ENCODE measurements at regions of chr16 and their contacts with region 1.

Region 1: DNA sequence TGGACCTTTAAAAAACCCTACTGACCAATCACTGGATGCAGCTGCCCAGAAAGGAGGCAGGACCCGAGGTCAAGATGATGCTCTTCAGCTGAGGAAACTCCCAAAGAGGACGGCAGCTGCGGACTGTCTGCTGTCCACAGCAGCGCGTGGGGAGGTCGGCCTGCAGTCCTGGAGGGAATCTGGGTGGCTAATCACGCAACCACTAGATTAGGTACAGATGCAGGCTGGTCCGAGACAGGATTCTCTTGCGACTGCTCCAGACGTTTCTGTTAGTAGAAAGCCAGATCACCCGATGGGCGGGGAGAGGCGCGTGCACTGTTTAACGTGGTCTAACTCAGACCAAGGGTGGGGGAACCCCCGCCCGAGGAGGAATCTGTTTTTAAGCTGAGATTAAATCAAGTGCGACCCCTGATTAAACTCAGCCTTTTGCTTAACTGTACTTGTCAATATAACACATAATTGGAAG is 8.8 kb downstream of the CTRB2 start:
- DNase-seq: no peak
- H3K4me3 Mint-ChIP-seq: no peak overlapping the region
- H3K27ac Mint-ChIP-seq: no peak overlapping the region
- H3K4me1 Mint-ChIP-seq: peaks cover 9% of the 10 kb centered on the region
- H3K27me3 Mint-ChIP-seq: peaks cover 13% of the 10 kb centered on the region

Region 2: DNA sequence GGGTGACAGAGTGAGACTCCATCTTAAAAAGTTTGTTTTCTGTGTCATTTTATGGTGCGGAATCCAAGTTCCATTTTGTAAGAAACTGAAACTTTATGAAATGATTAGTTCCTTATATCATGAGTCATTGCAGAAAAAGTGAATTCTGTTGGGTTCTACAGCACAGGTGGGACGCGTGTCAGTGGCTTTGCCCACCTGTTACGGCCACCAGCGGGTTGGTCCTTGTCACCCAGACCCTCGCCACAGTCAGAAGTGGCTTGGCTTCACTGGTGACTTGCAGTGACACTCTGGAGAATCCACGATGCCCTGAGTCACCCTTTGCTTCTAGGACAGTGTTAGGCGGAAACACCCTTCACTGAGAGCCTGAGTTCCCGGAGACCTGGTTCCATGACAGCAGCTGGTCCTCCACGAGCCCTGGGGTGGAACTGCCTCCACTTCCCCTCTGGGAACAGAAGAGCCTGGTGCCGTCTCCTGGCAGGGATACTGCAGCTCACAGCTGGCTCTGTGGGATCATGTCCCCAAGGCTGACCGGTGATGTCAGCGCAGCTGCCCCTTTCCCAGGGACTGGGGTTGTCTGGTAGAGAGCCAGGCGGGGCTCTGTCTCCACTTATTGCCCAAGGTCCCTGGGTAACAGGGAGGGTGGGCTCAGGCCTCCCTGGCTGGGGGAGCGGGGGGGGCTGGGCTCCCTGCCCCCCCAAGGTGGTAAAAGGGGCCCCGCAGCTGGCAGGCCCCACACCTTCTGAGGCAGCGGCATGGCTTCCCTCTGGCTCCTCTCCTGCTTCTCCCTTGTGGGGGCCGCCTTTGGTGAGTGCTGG is 20.3 kb after region 1 on chr16 and contains the start of gene CTRB1:
- CTCF ChIA-PET with region 1: interaction called, 32 read pairs
- POLR2A ChIA-PET with region 1: no interaction called
- intact Hi-C with region 1: loop called (anchors 2 kb)
- DNase-seq: peak; percentile 37
- H3K4me3 Mint-ChIP-seq: peak within 1 kb of the TSS; percentile 61
- H3K27ac Mint-ChIP-seq: peak within 1 kb of the TSS; percentile 75
- H3K4me1 Mint-ChIP-seq: peaks cover 10% of the 10 kb centered on the region
- H3K27me3 Mint-ChIP-seq: no peaks in the 10 kb centered on the region
- total RNA-seq, gene CTRB1: not detected

Region 3: DNA sequence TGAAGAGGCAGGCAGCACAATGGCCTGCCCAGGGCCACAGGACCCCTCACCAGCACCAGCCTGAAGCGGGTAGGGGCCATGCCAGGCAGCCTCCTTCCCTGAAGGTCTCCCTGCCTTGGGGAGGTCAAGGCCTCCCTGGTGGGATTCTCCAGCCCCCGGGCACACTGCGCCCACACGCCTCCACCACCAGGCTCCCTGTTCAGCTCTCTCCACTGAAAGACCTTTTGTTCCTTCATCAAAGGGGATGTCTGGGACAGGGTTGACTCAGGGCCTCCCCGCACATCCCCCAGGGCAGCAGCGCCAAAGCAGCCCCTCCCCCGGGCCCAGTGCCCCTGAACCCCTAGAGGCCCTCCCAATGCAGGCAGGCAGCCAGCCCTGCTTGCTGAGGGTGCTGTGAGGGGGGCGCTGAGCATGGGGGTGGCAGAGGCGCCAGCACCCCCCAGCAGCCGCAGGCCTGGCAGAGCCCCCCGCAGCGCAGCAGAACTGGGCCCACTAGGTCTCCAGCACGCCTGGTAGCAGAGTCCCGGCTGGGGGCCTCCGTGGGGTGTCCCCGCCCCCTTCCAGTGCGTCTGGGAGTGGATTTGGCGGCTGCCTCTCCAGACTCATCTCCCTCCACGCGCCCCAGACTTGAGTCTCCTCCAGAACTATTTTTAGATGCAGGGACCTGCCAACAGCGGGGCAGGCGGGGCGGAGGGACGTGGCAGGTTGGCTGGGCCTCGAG is 40.1 kb after region 1 on chr16:
- CTCF ChIA-PET with region 1: interaction called, 45 read pairs
- POLR2A ChIA-PET with region 1: no interaction called
- intact Hi-C with region 1: loop called (anchors 1 kb)
- DNase-seq: no peak
- H3K4me3 Mint-ChIP-seq: no peak overlapping the region
- H3K27ac Mint-ChIP-seq: no peak overlapping the region
- H3K4me1 Mint-ChIP-seq: peaks cover 2% of the 10 kb centered on the region
- H3K27me3 Mint-ChIP-seq: no peaks in the 10 kb centered on the region

Region 4: GRCh38 chr16:75385507-75386152 is 187.5 kb after region 1 on chr16:
- CTCF ChIA-PET with region 1: interaction called, 56 read pairs
- POLR2A ChIA-PET with region 1: no interaction called
- intact Hi-C with region 1: loop called (anchors 1 kb)
- DNase-seq: no peak
- H3K4me3 Mint-ChIP-seq: no peak overlapping the region
- H3K27ac Mint-ChIP-seq: no peak overlapping the region
- H3K4me1 Mint-ChIP-seq: peaks cover 22% of the 10 kb centered on the region
- H3K27me3 Mint-ChIP-seq: no peaks in the 10 kb centered on the region

Region 5: GRCh38 chr16:75402821-75403475 is 204.8 kb after region 1 on chr16:
- CTCF ChIA-PET with region 1: interaction called, 31 read pairs
- POLR2A ChIA-PET with region 1: no interaction called
- intact Hi-C with region 1: loop called (anchors 1 kb)
- DNase-seq: no peak
- H3K4me3 Mint-ChIP-seq: no peak overlapping the region
- H3K27ac Mint-ChIP-seq: no peak overlapping the region
- H3K4me1 Mint-ChIP-seq: peaks cover 16% of the 10 kb centered on the region
- H3K27me3 Mint-ChIP-seq: no peaks in the 10 kb centered on the region

Region 6: DNA sequence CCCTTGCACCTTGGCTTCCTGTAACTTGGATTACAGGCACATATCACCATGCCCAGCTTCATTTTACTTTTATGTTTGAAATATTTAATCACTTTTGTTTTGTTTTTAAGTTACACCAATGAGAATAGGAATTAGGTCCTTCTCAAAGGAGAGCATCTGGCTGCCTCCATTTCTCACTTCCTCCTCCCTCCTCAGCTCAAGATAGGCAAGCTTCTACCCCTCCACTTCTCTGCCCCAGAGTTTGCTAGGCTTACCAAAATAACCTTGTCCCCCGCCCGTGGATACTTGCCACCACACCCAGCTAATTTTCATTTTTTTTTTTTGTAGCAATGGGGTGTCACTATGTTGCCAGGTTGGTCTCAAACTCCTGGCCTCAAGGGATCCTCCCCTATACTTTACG is 385.9 kb after region 1 on chr16:
- CTCF ChIA-PET with region 1: no interaction called
- POLR2A ChIA-PET with region 1: no interaction called
- intact Hi-C with region 1: no loop called
- DNase-seq: no peak
- H3K4me3 Mint-ChIP-seq: no peak overlapping the region
- H3K27ac Mint-ChIP-seq: no peak overlapping the region
- H3K4me1 Mint-ChIP-seq: peaks cover 4% of the 10 kb centered on the region
- H3K27me3 Mint-ChIP-seq: no peaks in the 10 kb centered on the region

Region 7: DNA sequence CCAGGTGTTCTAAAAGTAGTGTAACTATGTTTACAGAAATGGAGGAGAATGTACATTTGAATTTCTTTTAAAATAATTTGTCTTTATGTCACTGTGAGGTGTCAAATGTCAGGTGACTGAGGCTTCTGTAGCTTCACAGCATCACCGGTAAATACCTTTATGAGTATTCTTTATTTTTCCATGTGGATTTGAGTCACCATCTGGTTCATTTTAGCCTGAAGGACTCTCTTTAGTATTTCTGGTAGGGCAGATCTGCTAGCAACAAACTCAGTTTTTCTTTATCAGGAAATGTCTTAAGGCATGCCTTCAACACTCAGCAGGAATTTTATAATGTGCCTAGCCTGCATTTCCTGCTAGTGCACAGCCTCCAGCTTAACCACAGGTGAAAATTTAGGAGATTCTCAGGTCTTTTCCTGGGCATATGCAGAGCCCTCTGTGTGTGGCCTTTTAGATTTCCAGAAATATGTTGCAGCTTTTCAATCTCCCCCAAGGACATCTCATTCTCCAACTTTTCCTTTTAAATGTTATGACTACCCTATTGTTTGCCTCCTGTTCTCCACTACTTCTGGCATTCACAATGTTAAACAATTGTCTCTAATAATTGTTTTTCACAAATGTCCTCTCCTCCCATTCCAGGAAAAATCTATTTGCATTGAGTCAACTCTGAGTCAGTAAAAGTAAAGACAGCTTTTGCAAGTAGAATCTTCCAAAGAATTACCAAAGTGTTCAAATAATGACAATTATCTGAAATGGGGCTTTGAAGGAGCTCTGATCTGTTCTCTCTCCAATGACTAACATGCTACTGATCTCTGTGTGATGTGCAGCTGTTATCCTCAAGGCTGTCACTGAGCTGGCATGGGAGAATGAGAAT is 767.6 kb after region 1 on chr16:
- CTCF ChIA-PET with region 1: no interaction called
- POLR2A ChIA-PET with region 1: no interaction called
- intact Hi-C with region 1: no loop called
- DNase-seq: no peak
- H3K4me3 Mint-ChIP-seq: no peak overlapping the region
- H3K27ac Mint-ChIP-seq: no peak overlapping the region
- H3K4me1 Mint-ChIP-seq: no peaks in the 10 kb centered on the region
- H3K27me3 Mint-ChIP-seq: no peaks in the 10 kb centered on the region

Region 8: DNA sequence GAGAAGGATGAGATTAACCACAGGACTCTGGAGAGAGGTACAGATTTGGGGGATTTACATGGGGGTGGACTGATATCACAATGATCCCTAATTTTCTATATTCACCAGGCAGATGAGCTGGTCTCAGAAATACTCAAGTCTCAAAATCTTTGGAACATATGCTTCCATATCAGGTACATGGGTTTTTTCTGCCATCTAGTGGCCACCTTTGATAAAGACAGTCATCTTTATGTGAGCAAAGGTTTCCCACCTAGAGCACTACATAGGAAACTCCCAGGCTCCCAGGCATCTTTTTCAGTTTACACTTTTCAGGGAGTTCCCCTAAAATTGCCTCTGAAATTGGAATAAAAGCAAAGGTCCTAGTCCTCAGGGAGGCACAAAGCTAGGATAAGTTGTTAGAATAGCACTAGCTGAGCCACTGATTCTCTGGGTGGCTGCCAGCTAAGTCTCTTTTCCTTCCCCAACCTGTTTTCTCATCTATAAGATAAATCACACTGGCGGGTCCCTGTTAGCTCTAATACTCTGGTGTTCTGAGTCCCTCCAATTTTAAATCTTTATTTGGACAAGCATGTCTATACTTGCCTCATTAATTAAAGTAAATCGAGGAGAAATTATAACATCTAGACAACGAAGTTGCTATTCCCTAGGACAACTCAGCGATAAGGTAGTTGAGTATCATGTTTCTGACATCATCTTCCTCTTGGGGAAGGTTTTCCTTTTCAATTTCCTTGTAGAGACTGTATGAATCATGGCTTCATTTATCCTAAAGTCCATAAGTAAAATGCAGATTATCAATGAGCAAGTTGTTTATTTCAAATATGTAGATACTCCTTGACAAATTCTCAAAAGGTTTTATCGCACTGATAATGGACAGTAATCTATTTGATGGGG is 1973.8 kb after region 1 on chr16:
- CTCF ChIA-PET with region 1: interaction called, 10 read pairs
- POLR2A ChIA-PET with region 1: no interaction called
- intact Hi-C with region 1: no loop called
- DNase-seq: no peak
- H3K4me3 Mint-ChIP-seq: no peak overlapping the region
- H3K27ac Mint-ChIP-seq: no peak overlapping the region
- H3K4me1 Mint-ChIP-seq: no peaks in the 10 kb centered on the region
- H3K27me3 Mint-ChIP-seq: peaks cover 35% of the 10 kb centered on the region

Measured in activated CD4-positive, alpha-beta memory T cell treated with anti-CD3 and anti-CD28 coated beads for 36 hours (primary cell).